Cardiac septum (tissue), 1 donor: ENCODE measurements at regions of chr10 and their contacts with region 1.

Region 1: GRCh38 chr10:48289501-48290238 is 15.2 kb upstream of the FRMPD2 start:
- DNase-seq: no peak

Region 2: GRCh38 chr10:48215488-48216204 is 74.0 kb before region 1 on chr10:
- intact Hi-C with region 1: loop called (anchors 5 kb)
- DNase-seq: no peak

Region 3: GRCh38 chr10:48251525-48252353 is 37.9 kb before region 1 on chr10:
- intact Hi-C with region 1: no loop called
- DNase-seq: peak; percentile 38

Region 4: DNA sequence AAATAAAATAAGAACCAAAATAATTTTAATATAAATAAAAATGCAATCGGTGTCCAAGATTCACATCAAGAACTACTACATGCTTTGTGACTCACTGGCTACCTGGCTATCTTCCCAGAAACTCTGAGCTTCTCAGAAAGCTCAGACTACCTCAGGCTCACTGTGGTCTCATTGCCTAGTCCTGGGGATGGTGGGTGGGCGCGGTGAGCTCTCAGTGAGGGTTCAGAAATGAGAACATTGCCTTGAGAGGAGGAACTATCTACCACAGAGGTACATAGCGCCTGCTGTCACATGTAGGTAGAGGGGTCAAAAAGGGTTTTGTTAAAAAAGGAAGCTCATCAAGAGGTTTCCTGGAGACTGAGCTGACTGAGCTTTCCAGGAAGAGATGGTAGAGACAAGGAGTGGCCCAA is 503.0 kb after region 1 on chr10:
- intact Hi-C with region 1: no loop called
- DNase-seq: no peak